PC-3 (cell line): ENCODE measurements at regions of chr11 and their contacts with region 1.

Region 1: GRCh38 chr11:9473408-9473807 is 12.6 kb downstream of the ZNF143 start:
- DNase-seq: no peak
- ATAC-seq: no peak
- H3K4me3 ChIP-seq: no peak overlapping the region
- H3K27ac ChIP-seq: no peak overlapping the region
- H3K4me1 ChIP-seq: no peaks in the 10 kb centered on the region
- H3K27me3 ChIP-seq: no peaks in the 10 kb centered on the region
- CTCF ChIP-seq: no peak

Region 2: GRCh38 chr11:9099617-9100016 is 373.8 kb before region 1 on chr11:
- CTCF ChIA-PET with region 1: no interaction called
- POLR2A ChIA-PET with region 1: interaction called, 20 read pairs
- intact Hi-C with region 1: no loop called
- DNase-seq: no peak
- ATAC-seq: no peak
- H3K4me3 ChIP-seq: no peak overlapping the region
- H3K27ac ChIP-seq: no peak overlapping the region
- H3K4me1 ChIP-seq: no peaks in the 10 kb centered on the region
- H3K27me3 ChIP-seq: no peaks in the 10 kb centered on the region
- CTCF ChIP-seq: no peak

Region 3: DNA sequence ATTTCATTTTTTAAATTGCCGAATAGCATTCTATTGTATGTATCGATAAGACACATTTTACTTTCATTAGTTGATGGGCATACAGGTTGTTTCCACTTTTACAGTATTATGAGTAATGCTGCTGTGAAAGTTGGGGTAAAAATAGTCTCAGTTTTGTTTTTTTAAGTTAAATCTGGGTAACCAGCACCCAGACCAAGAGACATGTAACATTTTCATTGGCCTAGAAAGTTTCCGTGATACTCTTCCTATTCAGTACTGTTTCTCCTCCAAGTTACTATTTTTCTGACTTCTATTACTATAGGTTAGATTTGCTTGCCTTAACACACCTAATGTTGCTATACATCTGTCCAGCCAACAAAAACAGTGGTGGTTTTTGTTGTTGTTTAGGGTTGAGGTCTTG is 76.7 kb before region 1 on chr11:
- CTCF ChIA-PET with region 1: no interaction called
- POLR2A ChIA-PET with region 1: no interaction called
- intact Hi-C with region 1: no loop called
- DNase-seq: no peak
- ATAC-seq: no peak
- H3K4me3 ChIP-seq: no peak overlapping the region
- H3K27ac ChIP-seq: no peak overlapping the region
- H3K4me1 ChIP-seq: no peaks in the 10 kb centered on the region
- H3K27me3 ChIP-seq: no peaks in the 10 kb centered on the region
- CTCF ChIP-seq: no peak